Pancreas (tissue), 10 donors: ENCODE measurements at regions of chr7 and their contacts with region 1.

Region 1: DNA sequence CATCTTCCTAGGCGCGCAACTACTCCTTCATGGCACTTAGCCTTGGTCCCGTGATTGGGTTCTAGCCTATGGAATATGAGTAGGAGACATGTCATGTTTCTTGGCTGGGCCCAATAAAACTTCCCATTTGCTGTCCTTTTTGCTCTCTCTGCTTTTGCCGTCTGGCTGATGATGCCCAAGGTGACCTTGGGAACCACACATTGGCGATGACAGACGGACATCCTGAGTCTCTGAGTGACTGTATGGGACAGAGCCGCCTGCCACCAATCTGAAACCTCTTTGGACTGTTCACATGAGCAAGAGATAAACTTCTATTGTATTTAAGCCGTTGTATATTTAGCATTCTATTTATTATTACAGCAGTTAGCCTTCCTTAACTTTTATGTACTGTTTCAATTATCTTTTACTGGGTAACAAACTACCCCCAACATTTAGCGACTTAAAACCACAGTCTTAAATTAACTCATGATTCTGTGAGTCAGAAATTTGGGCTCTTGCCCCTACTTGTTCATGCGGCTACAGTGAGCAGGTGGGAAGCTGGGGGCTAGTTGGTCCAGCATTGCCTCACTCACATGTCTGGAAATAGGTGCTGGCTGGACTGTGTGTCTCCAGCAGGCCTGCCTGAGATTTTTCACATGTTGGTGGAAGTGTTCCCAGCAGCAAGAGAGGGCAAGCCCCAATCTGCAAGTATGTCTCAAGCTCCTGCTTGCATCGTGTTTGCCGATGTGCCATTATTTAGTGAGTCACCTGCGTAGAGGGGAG is 71.7 kb downstream of the NOD1 start:
- DNase-seq: no peak
- ATAC-seq: peak in 1 of 4 donors; percentile 23
- H3K4me3 ChIP-seq: no peak overlapping the region
- H3K27ac ChIP-seq: no peak overlapping the region
- H3K4me1 ChIP-seq: no peaks in the 10 kb centered on the region
- H3K27me3 ChIP-seq: no peaks in the 10 kb centered on the region
- CTCF ChIP-seq: no peak

Region 2: GRCh38 chr7:30284298-30285066 is 122.4 kb before region 1 on chr7 and contains the start of gene ZNRF2:
- intact Hi-C with region 1: loop called in 1 of 3 experiments (anchors 10 kb)
- DNase-seq: peak; percentile 97 to 100 (median 100)
- ATAC-seq: peak; percentile 88 to 94 (median 89)
- H3K4me3 ChIP-seq: peak within 1 kb of the TSS; percentile 37 to 83 (median 60)
- H3K27ac ChIP-seq: peak within 1 kb of the TSS; percentile 95 to 98 (median 98)
- H3K4me1 ChIP-seq: peaks cover 0 to 28% (median 5%) of the 10 kb centered on the region in 3 donors
- H3K27me3 ChIP-seq: no peaks in the 10 kb centered on the region
- CTCF ChIP-seq: peak; percentile 8 to 35 (median 15)
- total RNA-seq, gene ZNRF2: 9.9 to 17.1 (median 11.8) TPM

Region 3: GRCh38 chr7:30594549-30595435 is 187.9 kb after region 1 on chr7 and contains the start of gene GARS1:
- intact Hi-C with region 1: no loop called
- DNase-seq: peak; percentile 84 to 95 (median 90)
- ATAC-seq: peak; percentile 92 to 97 (median 96)
- H3K4me3 ChIP-seq: peak within 1 kb of the TSS; percentile 79 to 98 (median 95)
- H3K27ac ChIP-seq: peak within 1 kb of the TSS; percentile 92 to 96 (median 94)
- H3K4me1 ChIP-seq: peaks cover 12 to 18% (median 14%) of the 10 kb centered on the region in 3 donors
- H3K27me3 ChIP-seq: no peaks in the 10 kb centered on the region
- CTCF ChIP-seq: no peak
- total RNA-seq, gene GARS1: 34.0 to 191 (median 39.7) TPM